Endothelial cell of umbilical vein (primary cell): ENCODE measurements at regions of chr17 and their contacts with region 1.

Region 1: DNA sequence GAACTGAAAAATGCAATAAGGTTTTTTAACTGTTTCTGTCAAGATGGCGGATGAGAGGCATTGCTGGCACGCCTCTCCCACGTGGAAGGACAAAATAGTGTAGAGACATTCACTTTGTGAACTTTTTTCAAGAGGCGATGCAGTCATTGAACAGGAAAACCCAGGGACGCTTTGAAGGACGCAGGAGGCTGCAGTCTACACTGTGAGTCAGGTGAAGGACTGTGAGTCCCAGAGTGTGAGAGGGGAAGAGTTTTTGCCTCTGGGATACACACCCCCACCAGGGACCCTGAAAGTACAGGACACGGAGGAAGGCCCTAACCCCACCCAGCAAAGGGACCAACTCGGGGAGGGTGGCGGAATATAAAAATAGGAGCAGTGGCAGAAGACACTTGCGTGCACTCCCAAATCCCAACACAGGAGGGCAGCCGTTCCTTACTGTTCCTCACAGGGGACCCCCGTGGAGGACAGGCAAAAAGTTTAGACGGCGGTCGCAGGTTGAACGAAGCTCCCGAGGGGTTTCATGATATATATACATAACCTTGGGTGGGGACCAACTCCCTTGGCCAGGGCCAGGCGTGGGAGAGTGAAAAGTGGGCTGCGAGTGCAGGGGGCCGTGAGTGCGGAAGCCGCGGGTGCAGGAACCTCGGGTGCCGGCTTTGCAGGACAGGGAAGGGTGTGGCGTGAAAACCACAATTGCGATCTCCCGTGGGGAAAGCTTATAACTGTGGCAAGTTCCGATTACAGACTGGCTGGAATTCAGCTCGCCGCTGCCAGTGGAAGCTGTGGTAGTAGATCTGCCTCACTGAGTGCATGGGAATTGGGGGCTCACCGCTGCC is 82.0 kb upstream of the ALOX12 start:
- DNase-seq: peak; percentile 62
- H3K4me3 ChIP-seq: no peak overlapping the region
- H3K27ac ChIP-seq: no peak overlapping the region
- H3K4me1 ChIP-seq: peaks cover 5% of the 10 kb centered on the region
- H3K27me3 ChIP-seq: peaks cover 36 to 42% of the 10 kb centered on the region in 2 experiments
- CTCF ChIP-seq: peak; percentile 82 to 84
- POLR2A ChIP-seq: no peak

Region 2: GRCh38 chr17:6729531-6729930 is 184.3 kb before region 1 on chr17:
- CTCF ChIA-PET with region 1: no interaction called
- POLR2A ChIA-PET with region 1: no interaction called
- dilution Hi-C with region 1: no loop called
- intact Hi-C with region 1: no loop called
- DNase-seq: no peak
- H3K4me3 ChIP-seq: no peak overlapping the region
- H3K27ac ChIP-seq: no peak overlapping the region
- H3K4me1 ChIP-seq: no peaks in the 10 kb centered on the region
- H3K27me3 ChIP-seq: peaks cover 2 to 10% of the 10 kb centered on the region in 2 experiments
- CTCF ChIP-seq: no peak
- POLR2A ChIP-seq: no peak

Region 3: DNA sequence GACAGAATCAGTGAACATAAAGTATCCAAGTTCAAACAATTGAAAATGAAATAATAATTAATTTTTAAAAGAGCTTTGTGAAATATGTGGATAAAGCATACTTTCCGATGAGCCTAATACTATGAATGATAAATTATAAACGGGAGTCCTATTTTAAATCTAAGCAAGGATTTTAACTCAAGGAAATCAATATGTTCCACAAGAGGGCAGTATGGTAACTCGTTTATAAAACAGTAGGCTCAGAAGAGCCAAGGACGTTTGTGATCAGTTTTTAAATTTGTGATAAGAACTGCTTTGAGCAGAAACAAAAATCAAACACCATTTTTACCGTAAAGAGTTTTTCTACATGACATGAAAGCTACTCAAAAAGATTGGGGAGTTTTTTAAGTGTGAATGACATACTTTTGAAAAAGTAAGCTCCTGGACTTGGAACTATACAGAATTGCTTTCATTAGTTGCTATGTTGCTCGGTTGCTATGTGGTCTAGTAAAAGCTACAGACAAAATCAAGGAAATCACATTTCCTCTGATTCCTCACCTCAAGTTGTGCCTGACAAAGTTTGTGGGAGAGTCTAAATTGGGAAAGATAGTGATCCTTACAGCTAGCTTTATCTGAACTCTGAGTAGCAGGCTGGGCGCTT is 70.5 kb before region 1 on chr17:
- CTCF ChIA-PET with region 1: interaction called, 22 read pairs
- POLR2A ChIA-PET with region 1: no interaction called
- dilution Hi-C with region 1: no loop called
- intact Hi-C with region 1: no loop called
- DNase-seq: peak; percentile 68
- H3K4me3 ChIP-seq: no peak overlapping the region
- H3K27ac ChIP-seq: no peak overlapping the region
- H3K4me1 ChIP-seq: no peaks in the 10 kb centered on the region
- H3K27me3 ChIP-seq: peaks cover 27 to 31% of the 10 kb centered on the region in 2 experiments
- CTCF ChIP-seq: peak; percentile 21 to 26
- POLR2A ChIP-seq: no peak

Region 4: GRCh38 chr17:6903326-6903900 is 10.4 kb before region 1 on chr17:
- CTCF ChIA-PET with region 1: interaction called, 13 read pairs
- POLR2A ChIA-PET with region 1: no interaction called
- dilution Hi-C with region 1: no loop called
- intact Hi-C with region 1: no loop called
- DNase-seq: no peak
- H3K4me3 ChIP-seq: no peak overlapping the region
- H3K27ac ChIP-seq: no peak overlapping the region
- H3K4me1 ChIP-seq: no peaks in the 10 kb centered on the region
- H3K27me3 ChIP-seq: peaks cover 0 to 2% of the 10 kb centered on the region in 2 experiments
- CTCF ChIP-seq: no peak
- POLR2A ChIP-seq: no peak

Region 5: DNA sequence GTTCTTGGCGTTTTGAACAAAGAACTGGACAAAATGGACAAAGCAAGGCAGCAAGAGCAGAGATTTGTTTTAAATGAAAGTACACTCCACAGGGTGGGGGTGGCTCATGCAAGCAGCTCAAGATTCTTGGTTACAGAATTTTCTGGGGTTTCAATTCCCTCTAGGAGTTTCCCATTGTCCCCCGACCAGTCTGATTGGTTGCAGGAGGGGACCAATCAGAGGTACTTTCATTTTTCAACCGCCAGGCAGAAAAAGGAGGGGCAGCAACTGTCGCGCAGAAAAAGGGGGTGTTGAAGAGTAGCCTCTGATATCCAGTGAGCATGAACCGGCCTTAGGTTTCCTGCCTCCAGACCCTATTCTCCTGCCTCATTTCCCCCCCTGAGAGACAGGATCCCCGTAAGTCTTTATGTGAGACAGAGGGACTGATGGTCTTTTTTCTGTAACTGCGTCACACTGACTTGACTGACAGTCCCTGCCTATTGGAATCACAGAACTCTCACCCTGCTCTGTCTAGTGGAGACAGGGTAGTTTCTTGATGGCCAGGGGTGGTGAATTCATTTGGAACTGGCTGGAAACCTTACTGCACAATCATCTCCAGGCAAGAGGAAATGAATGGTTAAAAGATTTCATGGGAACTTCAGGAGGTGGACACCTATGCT is 22.7 kb after region 1 on chr17:
- CTCF ChIA-PET with region 1: interaction called, 10 read pairs
- POLR2A ChIA-PET with region 1: no interaction called
- dilution Hi-C with region 1: no loop called
- intact Hi-C with region 1: no loop called
- DNase-seq: peak; percentile 38
- H3K4me3 ChIP-seq: peak overlapping the region; percentile 19 to 50 (median 39)
- H3K27ac ChIP-seq: no peak overlapping the region
- H3K4me1 ChIP-seq: no peaks in the 10 kb centered on the region
- H3K27me3 ChIP-seq: peaks cover 3 to 8% of the 10 kb centered on the region in 2 experiments
- CTCF ChIP-seq: no peak
- POLR2A ChIP-seq: no peak

Region 6: DNA sequence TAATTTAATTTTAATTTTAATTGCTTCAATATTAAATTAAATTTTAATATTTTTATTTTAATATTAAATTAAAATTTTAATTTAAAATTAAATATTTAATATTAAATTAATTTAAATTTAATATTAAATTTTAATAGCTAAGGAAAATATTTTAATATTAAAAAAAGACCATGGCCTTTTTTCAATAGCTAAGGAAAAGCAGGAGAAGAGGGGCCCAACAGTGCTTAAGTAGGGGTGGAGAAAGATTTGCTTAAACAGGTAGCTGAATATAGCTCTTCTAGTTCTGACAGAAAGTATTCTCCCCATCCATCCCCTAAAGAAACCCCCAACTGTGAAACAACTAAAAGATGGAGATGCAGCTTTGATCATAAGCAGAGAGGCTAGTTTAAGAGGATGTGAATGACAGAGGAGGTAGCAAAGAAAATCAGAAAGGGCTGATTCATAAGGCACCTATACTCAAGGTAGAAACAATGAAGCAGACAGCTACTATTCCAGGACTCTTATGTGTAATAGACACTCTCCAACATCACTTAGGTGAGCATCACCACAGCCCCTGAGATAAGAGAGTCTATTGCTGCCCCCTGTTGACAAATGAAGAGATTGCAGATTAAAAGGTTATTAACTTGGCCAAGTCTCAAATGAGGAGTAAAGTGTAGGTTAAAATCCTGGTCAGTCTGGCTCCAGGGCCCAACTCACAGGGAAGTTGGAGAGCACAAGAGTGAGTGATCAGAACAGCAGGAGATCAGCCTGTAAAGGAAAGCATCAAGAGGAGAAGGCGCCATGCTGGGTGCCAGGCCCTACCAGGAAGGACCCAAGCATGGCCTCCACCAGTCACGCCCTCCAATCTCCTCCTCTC is 90.8 kb after region 1 on chr17:
- CTCF ChIA-PET with region 1: interaction called, 100 read pairs
- POLR2A ChIA-PET with region 1: no interaction called
- dilution Hi-C with region 1: no loop called
- intact Hi-C with region 1: loop called (anchors 1 kb)
- DNase-seq: peak; percentile 66
- H3K4me3 ChIP-seq: no peak overlapping the region
- H3K27ac ChIP-seq: no peak overlapping the region
- H3K4me1 ChIP-seq: no peaks in the 10 kb centered on the region
- H3K27me3 ChIP-seq: no peaks in the 10 kb centered on the region
- CTCF ChIP-seq: peak; percentile 53 to 58
- POLR2A ChIP-seq: no peak

Region 7: DNA sequence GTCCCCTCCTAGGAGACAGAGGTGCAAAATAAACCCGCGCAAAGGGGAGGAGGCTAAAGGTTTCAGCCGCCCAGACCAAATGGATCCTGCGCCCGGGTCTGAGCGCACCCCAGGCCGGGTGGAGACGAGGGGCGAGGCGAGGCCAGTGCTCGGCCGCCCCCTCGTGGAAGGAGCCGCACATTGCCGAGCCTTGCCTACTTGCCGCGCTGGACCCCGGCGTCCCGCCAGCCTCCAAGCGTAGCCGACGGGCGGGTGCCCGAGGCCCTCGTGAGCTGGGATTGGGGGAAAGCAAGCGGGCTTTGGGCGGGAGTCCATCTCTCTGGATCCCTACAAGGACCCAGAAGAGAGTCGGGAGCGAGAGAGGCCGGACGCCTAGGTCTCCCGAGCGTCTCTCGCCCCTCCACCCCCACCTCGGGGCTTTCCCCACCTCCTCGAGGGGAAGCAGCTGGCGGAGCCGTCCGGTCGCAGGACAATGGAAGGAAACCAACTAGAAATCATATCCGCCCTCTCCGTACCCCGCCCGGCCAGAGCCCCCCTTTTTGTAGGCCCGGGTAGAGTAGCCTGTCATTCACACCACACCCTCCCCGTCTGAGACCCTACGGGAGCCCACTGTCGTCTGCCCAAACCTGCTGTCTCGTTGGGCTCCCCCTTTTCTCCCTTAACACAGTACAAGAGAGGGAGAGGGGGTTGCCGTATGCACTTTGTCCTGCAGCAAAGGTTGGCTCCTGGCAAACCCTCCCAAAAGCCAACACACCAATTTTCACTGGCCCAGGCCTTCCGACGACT is 108.4 kb after region 1 on chr17:
- CTCF ChIA-PET with region 1: interaction called, 91 read pairs
- POLR2A ChIA-PET with region 1: interaction called, 3 read pairs
- dilution Hi-C with region 1: no loop called
- intact Hi-C with region 1: loop called (anchors 1 kb)
- DNase-seq: peak; percentile 97
- H3K4me3 ChIP-seq: peak overlapping the region in 2 of 3 experiments; percentile 59 to 90
- H3K27ac ChIP-seq: peak overlapping the region; percentile 96
- H3K4me1 ChIP-seq: peaks cover 58% of the 10 kb centered on the region
- H3K27me3 ChIP-seq: no peaks in the 10 kb centered on the region
- CTCF ChIP-seq: peak; percentile 97 to 99
- POLR2A ChIP-seq: peak; percentile 66

Region 8: DNA sequence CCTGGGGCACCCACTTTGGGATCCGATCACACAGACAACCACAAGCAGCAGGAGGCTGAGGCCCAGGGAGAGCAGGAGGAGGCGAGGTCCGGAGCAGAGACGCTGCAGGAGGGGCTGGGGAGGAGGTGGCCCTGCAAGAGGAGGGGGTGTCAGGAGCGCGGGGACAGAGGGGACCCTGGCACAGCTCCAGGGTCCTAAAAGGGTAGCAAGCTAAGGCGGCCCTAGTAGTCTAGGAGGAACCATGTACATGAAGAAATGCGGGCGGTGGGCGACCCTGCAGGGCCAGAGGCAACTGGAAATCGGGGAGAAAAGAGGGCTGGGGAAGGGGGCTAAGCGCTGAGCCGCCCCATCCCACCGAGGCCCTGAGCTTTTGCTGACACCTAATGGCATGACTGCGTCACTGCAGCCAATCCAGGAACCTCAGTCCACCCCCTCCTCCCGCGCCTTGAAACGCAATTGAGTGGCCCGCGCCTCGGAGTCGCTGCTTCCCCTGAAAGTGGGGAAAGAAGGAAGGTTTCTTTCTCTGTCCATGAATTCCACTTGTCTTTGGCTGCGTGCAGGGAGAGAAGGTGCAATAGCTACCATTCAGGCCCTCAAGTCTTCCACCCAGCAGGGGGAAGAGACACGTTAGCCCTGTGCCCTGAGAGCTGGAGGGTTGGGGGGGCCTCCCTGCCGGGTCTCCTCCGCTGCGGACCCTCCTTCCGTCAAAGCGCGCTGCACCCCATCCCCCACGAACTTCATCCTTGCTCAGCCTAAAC is 263.5 kb after region 1 on chr17:
- CTCF ChIA-PET with region 1: interaction called, 7 read pairs
- POLR2A ChIA-PET with region 1: no interaction called
- dilution Hi-C with region 1: no loop called
- intact Hi-C with region 1: loop called (anchors 2 kb)
- DNase-seq: peak; percentile 74
- H3K4me3 ChIP-seq: peak overlapping the region; percentile 30 to 66 (median 46)
- H3K27ac ChIP-seq: peak overlapping the region; percentile 63
- H3K4me1 ChIP-seq: peaks cover 17% of the 10 kb centered on the region
- H3K27me3 ChIP-seq: no peaks in the 10 kb centered on the region
- CTCF ChIP-seq: peak; percentile 81 to 95
- POLR2A ChIP-seq: peak; percentile 28